ENCODE measurements at regions of chr11 and their contacts with region 1.

Region 1: GRCh38 chr11:30143098-30143705 is 87.6 kb upstream of the FSHB start:
- DNase-seq: peak; percentile 21
- H3K4me3 ChIP-seq: peak overlapping the region in 1 of 2 experiments; percentile 9; a peak in 1 of 4 replicates
- H3K27ac ChIP-seq: no peak overlapping the region
- H3K4me1 ChIP-seq: no peaks in the 10 kb centered on the region
- H3K27me3 ChIP-seq: no peaks in the 10 kb centered on the region
- CTCF ChIP-seq: peak; percentile 82
- EP300 ChIP-seq: no peak
- RAD21 ChIP-seq: peak; percentile 60

Region 2: GRCh38 chr11:29432719-29433325 is 710.4 kb before region 1 on chr11:
- CTCF ChIA-PET with region 1: interaction called, 24 read pairs
- POLR2A ChIA-PET with region 1: no interaction called
- DNase-seq: peak; percentile 14
- H3K4me3 ChIP-seq: no peak overlapping the region
- H3K27ac ChIP-seq: no peak overlapping the region
- H3K4me1 ChIP-seq: no peaks in the 10 kb centered on the region; a peak in 1 of 4 replicates
- H3K27me3 ChIP-seq: no peaks in the 10 kb centered on the region
- CTCF ChIP-seq: peak; percentile 76
- EP300 ChIP-seq: no peak
- RAD21 ChIP-seq: peak; percentile 52

Region 3: GRCh38 chr11:29448246-29448877 is 694.8 kb before region 1 on chr11:
- CTCF ChIA-PET with region 1: interaction called, 13 read pairs
- POLR2A ChIA-PET with region 1: no interaction called
- DNase-seq: no peak
- H3K4me3 ChIP-seq: peak overlapping the region in 1 of 2 experiments; percentile 7; a peak in 1 of 4 replicates
- H3K27ac ChIP-seq: no peak overlapping the region
- H3K4me1 ChIP-seq: peaks cover 0 to 8% of the 10 kb centered on the region in 2 experiments; a peak in 2 of 4 replicates
- H3K27me3 ChIP-seq: no peaks in the 10 kb centered on the region
- CTCF ChIP-seq: peak; percentile 65
- EP300 ChIP-seq: no peak
- RAD21 ChIP-seq: peak; percentile 64

Region 4: DNA sequence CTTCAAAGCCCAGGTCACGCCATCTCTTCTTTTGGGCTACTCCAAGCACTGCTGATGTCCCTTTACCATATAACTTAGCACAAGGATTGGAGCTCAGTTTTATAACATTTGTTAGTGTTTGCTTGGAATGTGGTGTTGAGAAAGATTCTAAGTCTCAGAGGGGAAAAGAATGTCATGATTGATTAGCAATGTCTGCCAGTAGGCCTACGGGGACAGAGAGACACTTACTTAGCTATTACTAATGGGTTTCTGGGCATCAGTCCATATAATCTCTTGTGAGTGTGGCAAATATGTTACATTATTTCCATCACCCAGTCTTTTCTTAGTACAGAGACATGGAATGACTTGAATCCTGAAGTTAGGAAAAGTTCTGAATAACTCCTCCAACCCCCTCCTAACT is 12.2 kb after region 1 on chr11:
- CTCF ChIA-PET with region 1: interaction called, 49 read pairs
- POLR2A ChIA-PET with region 1: no interaction called
- DNase-seq: no peak
- H3K4me3 ChIP-seq: no peak overlapping the region
- H3K27ac ChIP-seq: no peak overlapping the region
- H3K4me1 ChIP-seq: no peaks in the 10 kb centered on the region
- H3K27me3 ChIP-seq: no peaks in the 10 kb centered on the region
- CTCF ChIP-seq: no peak
- EP300 ChIP-seq: no peak
- RAD21 ChIP-seq: no peak

Region 5: DNA sequence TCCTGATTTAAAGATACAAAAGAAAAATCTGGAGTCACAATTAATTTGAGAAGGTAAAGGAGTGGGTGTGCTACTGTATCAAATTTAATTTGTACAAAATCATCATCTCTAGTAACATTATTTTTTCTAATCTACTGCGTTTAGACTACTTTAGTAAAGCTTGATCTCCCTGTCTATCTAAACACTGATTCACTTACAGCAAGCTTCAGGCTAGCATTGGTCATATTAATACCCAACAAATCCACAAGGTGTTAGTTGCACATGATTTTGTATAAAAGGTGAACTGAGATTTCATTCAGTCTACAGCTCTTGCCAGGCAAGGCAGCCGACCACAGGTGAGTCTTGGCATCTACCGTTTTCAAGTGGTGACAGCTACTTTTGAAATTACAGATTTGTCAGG is 87.5 kb after region 1 on chr11 and contains the start of gene FSHB:
- CTCF ChIA-PET with region 1: no interaction called
- POLR2A ChIA-PET with region 1: no interaction called
- DNase-seq: no peak
- H3K4me3 ChIP-seq: no peak within 1 kb of the TSS
- H3K27ac ChIP-seq: no peak within 1 kb of the TSS
- H3K4me1 ChIP-seq: no peaks in the 10 kb centered on the region
- H3K27me3 ChIP-seq: no peaks in the 10 kb centered on the region
- CTCF ChIP-seq: no peak
- EP300 ChIP-seq: no peak
- RAD21 ChIP-seq: no peak
- polyA plus RNA-seq, gene FSHB: not detected in 2 replicates